ENCODE measurements at regions of chr15 and their contacts with region 1.

Region 1: DNA sequence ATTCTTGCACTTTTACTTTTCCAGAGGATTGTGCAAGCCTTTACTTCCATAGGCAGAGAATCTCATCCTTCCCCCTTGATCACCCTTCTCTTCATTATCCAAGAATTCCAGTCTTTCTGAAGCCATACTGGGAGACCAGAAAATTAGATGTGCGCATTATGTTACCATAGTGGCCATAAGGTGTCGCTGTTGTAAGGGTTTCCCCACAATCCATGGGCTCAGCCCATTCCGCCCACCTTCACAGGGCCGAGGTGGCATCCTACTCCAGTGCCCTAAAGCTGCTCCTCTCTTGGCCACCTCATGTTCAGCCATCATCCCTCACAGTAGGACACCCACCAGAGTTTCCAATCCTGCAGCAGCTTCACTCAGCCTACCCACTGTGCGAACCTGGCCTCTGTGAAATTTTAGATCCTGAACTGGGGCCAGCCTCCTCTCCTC is 35.0 kb downstream of the CTSH start:
- DNase-seq: no peak
- ATAC-seq: peak; percentile 30 to 54 (median 50)
- H3K4me3 ChIP-seq: no peak overlapping the region
- H3K27ac ChIP-seq: no peak overlapping the region
- H3K4me1 ChIP-seq: peaks cover 14% of the 10 kb centered on the region
- H3K27me3 ChIP-seq: no peaks in the 10 kb centered on the region
- CTCF ChIP-seq: peak; percentile 58

Region 2: DNA sequence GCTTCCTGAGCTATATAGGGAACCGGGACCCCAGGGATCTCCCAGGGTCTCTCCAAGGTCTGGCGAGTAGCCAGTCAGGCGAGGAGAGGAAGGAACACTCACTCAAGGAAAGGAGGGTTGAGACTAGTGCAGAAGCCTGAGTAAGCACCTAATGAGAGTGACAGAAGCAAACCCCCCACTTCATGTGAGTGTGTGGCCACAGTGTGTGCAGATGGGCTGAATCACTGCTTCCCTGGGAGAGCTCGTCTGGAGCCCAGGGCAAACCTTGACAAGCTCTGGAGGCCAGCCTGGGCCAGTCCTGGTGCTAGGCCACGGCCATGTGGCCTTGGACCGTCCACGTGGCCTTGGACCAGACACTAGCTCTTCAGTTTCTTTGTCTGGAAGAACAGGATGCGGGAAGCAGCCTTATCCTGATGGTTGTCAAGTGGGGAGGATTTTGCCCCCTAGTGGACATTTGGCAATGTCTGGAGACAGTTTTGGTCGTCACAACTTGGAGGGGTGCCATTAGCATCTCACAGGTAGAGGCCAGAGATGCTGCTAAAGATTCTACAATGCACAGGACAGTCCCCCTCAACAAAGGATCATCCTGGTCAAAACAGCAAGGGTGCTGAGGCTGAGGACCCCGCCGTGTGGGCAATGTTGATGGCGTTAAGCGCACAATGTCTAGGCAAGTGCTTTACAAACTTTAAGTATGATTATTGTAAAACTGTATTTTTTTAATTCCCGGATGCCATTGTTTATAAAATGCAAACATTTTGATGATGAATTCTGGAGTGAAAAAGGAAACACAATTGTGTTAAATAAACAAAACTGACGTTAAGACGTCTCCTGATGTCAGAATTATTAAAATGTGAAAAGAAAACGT is 69.9 kb after region 1 on chr15:
- intact Hi-C with region 1: loop called in 1 of 2 experiments (anchors 2 kb)
- DNase-seq: no peak
- ATAC-seq: peak; percentile 30 to 69 (median 60)
- H3K4me3 ChIP-seq: no peak overlapping the region
- H3K27ac ChIP-seq: no peak overlapping the region
- H3K4me1 ChIP-seq: no peaks in the 10 kb centered on the region
- H3K27me3 ChIP-seq: no peaks in the 10 kb centered on the region
- CTCF ChIP-seq: peak; percentile 56

Region 3: DNA sequence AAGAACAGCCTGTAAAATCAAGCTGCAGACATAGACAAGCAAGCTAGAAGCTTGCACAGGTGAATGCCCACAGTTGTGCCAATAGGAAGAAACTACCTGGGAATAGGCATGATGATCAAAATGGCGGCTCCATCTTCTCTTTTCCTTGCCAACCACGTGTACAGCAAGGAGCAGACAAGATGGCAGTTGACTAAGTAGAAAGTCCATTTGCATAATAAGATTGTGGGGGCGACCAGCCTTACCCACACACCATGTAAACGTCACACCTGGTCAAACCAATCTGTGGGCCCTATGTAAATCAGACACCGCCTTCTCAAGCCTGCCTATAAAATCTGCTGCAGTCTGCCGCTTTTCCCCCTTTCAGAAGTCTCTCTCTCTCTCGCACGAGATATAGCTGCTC is 347.6 kb after region 1 on chr15:
- intact Hi-C with region 1: no loop called
- DNase-seq: no peak
- ATAC-seq: no peak
- H3K4me3 ChIP-seq: no peak overlapping the region
- H3K27ac ChIP-seq: no peak overlapping the region
- H3K4me1 ChIP-seq: no peaks in the 10 kb centered on the region
- H3K27me3 ChIP-seq: no peaks in the 10 kb centered on the region
- CTCF ChIP-seq: no peak

Measured in psoas muscle (tissue), 8 donors.